ENCODE measurements at regions of chr11 and their contacts with region 1.

Region 1: GRCh38 chr11:46700241-46701077 is at the starts of genes ARHGAP1 and ZNF408:
- DNase-seq: peak; percentile 98
- H3K4me3 ChIP-seq: peak within 1 kb of the TSS; percentile 70 to 87 (median 79)
- H3K27ac ChIP-seq: peak within 1 kb of the TSS; percentile 89
- H3K4me1 ChIP-seq: peaks cover 5% of the 10 kb centered on the region
- H3K27me3 ChIP-seq: no peaks in the 10 kb centered on the region
- CTCF ChIP-seq: no peak
- POLR2A ChIP-seq: peak; percentile 94
- total RNA-seq, gene ARHGAP1: 58.2 and 63.4 TPM in 2 replicates
- total RNA-seq, gene ZNF408: 10.3 and 10.9 TPM in 2 replicates

Region 2: GRCh38 chr11:46009647-46010046 is 690.8 kb before region 1 on chr11:
- CTCF ChIA-PET with region 1: no interaction called
- POLR2A ChIA-PET with region 1: no interaction called
- dilution Hi-C with region 1: no loop called
- intact Hi-C with region 1: no loop called
- DNase-seq: no peak
- H3K4me3 ChIP-seq: no peak overlapping the region
- H3K27ac ChIP-seq: no peak overlapping the region
- H3K4me1 ChIP-seq: no peaks in the 10 kb centered on the region
- H3K27me3 ChIP-seq: no peaks in the 10 kb centered on the region
- CTCF ChIP-seq: no peak
- POLR2A ChIP-seq: no peak

Region 3: GRCh38 chr11:46404476-46405017 is 295.9 kb before region 1 on chr11:
- CTCF ChIA-PET with region 1: no interaction called
- POLR2A ChIA-PET with region 1: no interaction called
- dilution Hi-C with region 1: no loop called
- intact Hi-C with region 1: no loop called
- DNase-seq: no peak
- H3K4me3 ChIP-seq: no peak overlapping the region
- H3K27ac ChIP-seq: no peak overlapping the region
- H3K4me1 ChIP-seq: no peaks in the 10 kb centered on the region
- H3K27me3 ChIP-seq: no peaks in the 10 kb centered on the region
- CTCF ChIP-seq: no peak
- POLR2A ChIP-seq: no peak

Region 4: DNA sequence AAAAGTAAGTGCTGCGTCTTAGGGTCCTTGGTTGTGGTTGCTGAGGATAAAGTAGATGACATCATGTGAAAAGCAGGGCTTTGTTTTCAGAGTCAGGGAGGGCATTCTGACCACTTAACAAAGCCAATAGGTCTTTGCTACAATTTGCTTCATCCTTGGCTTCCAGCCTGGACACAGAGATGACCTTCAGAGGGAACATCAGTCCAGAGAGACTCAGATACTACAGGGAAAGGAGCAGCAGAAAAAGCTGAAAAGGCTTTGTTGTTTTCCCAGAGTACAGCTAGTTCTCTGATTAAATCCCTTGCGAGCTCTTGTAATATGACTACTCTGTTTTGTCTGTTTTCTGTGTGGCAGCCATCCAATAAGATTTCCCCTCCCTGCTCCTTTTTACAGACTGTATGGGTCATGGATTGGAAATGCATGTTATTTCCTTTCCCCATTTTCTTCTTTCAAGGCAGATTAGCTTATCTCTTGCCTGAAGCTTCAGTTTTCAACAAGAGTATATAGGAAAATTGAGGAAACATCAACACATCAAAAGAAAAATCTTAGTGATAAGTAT is 51.2 kb before region 1 on chr11:
- CTCF ChIA-PET with region 1: no interaction called
- POLR2A ChIA-PET with region 1: no interaction called
- dilution Hi-C with region 1: no loop called
- intact Hi-C with region 1: loop called (anchors 1 kb)
- DNase-seq: peak; percentile 98
- H3K4me3 ChIP-seq: peak overlapping the region in 1 of 3 experiments; percentile 51
- H3K27ac ChIP-seq: peak overlapping the region; percentile 99
- H3K4me1 ChIP-seq: peaks cover 29% of the 10 kb centered on the region
- H3K27me3 ChIP-seq: no peaks in the 10 kb centered on the region
- CTCF ChIP-seq: no peak
- POLR2A ChIP-seq: no peak

Region 5: GRCh38 chr11:46736615-46737014 is 36.2 kb after region 1 on chr11:
- CTCF ChIA-PET with region 1: no interaction called
- POLR2A ChIA-PET with region 1: no interaction called
- dilution Hi-C with region 1: no loop called
- intact Hi-C with region 1: loop called (anchors 2 kb)
- DNase-seq: peak; percentile 84
- H3K4me3 ChIP-seq: no peak overlapping the region
- H3K27ac ChIP-seq: no peak overlapping the region
- H3K4me1 ChIP-seq: peaks cover 4% of the 10 kb centered on the region
- H3K27me3 ChIP-seq: no peaks in the 10 kb centered on the region
- CTCF ChIP-seq: no peak
- POLR2A ChIP-seq: no peak